PC-9 (cell line): ENCODE measurements at regions of chr10 and their contacts with region 1.

Region 1: DNA sequence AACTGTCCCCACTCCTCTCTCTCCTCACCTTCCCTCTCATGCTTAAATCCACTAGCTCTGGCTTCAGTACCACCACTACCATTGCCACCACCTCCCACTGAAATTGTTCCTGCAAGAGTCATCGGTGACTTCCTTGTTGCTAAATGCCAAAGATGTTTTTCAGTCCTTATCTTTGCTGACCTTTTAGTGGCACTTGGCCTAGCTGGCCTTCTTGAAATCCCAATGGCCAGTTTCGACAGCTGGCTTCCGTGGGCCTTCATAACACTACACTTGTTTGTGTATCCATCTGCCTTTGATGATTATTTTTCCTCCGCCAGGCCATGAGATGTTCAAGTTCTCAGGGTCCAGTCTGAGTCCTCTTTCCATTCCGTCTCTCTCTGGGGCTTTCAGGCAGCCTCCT is 118.2 kb upstream of the NANOS1 start:
- DNase-seq: peak; percentile 59 to 94
- H3K4me3 ChIP-seq: no peak overlapping the region
- H3K27ac ChIP-seq: peak overlapping the region; percentile 87
- H3K4me1 ChIP-seq: peaks cover 41% of the 10 kb centered on the region
- H3K27me3 ChIP-seq: no peaks in the 10 kb centered on the region
- CTCF ChIP-seq: no peak

Region 2: DNA sequence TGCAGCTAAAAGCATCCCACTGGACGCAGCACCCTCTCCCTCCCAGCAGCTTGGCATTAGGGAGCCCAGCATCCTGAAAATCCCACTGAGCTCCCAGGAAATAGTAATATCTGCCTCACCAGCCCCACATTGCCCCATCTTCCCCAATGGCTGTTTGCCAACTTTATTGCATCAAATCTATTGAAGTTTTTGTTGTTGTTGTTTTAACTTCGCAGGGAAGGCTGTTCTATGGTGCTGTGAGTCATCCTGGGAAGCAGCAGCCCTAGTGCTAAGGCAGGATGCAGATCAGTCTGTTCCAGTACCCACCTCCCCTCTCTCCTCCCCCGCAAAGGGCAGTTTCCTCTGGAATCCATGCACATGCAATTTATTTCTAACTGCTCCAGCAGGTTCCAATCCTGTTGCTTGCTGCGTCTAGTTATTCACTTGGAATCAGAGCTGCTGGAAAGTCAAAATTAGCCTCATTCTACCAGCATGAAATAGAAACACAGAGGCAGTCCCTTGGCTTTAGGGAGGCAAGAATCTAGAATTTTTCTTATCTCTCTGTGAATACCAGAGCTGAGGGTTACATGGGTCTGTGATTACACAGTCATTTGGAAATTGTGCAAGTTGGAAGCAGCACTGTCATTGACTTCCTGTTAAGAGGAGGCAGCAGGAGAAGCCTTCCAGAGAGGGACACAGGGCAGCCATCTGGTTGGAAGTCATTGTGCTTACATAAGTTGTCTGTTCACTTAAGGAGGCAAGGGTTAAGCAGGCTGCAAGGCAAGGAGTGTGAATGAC is 40.7 kb before region 1 on chr10:
- CTCF ChIA-PET with region 1: no interaction called
- POLR2A ChIA-PET with region 1: no interaction called
- intact Hi-C with region 1: loop called (anchors 5 kb)
- DNase-seq: peak; percentile 60 to 82
- H3K4me3 ChIP-seq: no peak overlapping the region
- H3K27ac ChIP-seq: peak overlapping the region; percentile 82
- H3K4me1 ChIP-seq: peaks cover 46% of the 10 kb centered on the region
- H3K27me3 ChIP-seq: no peaks in the 10 kb centered on the region
- CTCF ChIP-seq: no peak

Region 3: DNA sequence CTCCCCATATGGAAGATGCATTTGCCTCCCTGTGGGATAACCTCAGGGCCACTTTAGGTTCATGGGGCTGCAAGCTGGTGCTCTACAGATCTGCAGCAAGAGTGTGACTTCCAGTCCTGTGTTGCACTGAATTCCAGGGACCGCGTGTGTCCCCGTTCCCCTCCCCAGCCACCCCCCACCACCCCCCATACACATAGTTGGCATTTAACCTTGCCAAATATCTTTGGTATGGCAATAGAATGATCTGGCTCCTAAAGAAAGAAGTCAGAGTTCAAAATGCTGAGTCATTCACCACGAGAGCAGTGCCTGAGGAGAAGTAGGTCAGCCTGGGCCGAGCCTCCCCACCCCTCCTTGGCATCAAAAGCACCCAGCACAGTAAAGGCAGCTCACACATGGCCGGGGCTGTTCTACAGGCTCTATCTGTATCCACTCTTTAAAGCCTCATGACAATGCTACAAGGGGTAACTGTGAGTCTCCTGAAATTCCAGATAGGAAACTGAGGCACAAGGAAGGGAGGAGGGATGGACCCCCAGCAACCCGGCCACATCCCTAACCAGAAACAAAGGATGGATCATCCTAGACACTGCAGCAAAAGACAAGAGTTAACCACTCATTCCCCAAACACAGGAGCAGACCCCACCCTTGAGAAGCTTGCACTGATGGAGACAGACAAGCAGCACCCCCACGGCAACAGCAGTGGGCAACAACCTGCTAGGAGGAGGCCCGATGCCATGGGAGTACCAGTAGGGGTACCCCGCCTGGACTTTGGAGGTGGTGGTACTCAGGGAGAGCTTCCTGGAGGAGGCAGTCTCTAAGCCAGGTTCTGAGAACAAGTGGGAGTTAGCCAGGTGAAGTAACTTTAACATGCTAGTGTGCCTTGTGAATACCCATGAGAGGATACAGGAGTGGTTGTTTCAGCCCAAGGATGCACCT is 47.9 kb after region 1 on chr10:
- CTCF ChIA-PET with region 1: interaction called, 3 read pairs
- POLR2A ChIA-PET with region 1: no interaction called
- intact Hi-C with region 1: loop called (anchors 1 kb)
- DNase-seq: peak; percentile 65 to 87
- H3K4me3 ChIP-seq: peak overlapping the region; percentile 24; the same call in 1 of the 2 replicates
- H3K27ac ChIP-seq: peak overlapping the region; percentile 92
- H3K4me1 ChIP-seq: peaks cover 49% of the 10 kb centered on the region
- H3K27me3 ChIP-seq: no peaks in the 10 kb centered on the region
- CTCF ChIP-seq: no peak

Region 4: DNA sequence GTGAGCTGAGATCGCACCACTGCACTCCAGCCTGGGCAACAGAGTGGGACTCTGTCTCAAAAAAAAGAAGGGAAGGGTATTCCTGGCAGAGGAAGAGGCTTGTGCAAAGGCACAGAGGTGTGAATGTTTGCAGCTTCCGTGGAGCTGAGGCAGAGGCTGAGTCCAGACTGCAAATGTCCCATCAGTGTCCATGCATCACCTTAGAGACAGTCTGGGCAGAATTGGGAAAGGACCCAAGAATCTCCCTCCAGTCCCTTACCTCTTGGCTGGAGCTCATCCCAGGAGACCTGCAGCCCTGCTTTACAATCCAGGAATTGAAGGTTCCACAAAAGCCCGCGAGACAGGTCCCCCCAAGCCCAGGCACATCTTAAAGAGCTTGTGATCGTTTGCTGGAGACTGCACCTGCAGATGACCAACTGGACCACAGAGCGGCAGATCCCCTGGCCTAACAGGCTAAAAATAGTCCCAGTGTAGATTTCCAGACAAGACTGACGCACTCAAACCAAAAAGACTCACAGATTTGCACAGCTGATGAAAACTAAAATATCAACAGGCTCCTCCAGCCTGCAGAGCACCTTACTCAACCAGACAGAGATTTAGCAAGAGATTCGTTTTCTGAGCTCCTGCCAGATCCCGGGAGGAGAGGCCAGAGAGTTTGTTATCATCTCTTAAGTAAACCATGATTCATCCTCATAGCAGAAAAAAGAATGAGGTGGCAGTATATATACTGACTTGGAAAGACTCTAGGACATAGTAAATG is 95.3 kb after region 1 on chr10:
- CTCF ChIA-PET with region 1: no interaction called
- POLR2A ChIA-PET with region 1: no interaction called
- intact Hi-C with region 1: loop called (anchors 2 kb)
- DNase-seq: peak; percentile 60 to 96
- H3K4me3 ChIP-seq: no peak overlapping the region
- H3K27ac ChIP-seq: peak overlapping the region; percentile 53
- H3K4me1 ChIP-seq: peaks cover 38% of the 10 kb centered on the region
- H3K27me3 ChIP-seq: no peaks in the 10 kb centered on the region
- CTCF ChIP-seq: no peak